ENCODE measurements at regions of chr4 and their contacts with region 1.

Region 1: DNA sequence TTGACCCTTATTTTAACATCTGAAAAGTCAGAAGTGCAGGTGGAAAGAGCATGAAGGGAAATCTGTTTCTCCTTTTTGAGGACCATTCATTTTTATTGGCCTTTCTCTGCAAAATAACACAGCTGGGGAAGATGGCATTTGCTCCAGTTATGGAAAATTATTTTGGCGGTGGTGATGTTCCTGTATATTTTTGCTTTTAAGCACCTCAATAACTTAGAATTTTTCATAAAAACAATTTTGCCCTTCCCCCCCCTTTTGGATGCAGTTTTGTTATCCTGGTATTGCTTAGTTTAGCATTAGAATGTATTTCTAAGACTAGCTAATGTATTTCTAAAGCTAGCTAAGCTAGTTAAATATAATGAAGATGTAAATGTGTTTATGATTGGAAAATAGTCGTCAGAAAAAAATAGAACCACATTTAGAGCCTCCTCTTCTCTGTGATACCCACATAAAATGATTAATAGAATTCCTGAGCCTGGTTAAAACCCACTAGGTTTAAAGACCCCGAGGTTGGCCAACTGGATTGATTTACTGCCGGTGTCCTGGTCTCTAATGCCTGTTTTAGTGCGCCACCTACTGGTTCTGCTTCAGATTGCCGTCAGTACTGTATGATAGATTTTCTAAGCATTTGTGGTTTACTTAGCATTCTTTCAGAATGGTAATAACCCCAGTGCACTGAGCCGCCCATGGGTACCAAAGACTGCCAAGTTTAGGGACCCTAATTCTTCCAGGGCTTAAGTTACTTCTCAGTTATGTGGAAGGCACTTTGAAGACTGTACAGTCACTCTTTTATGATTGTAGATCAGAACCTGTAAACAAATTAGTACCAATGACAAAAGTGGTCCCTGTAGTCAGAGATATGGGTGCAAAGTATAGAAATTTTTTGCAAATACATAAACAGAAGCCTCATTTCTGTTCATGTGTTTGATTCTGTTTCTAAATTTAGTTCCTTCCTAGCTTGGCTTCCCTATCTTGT is 11.4 kb downstream of the KLF3 start:
- DNase-seq: peak; percentile 77
- H3K4me3 Mint-ChIP-seq: peak overlapping the region; percentile 55
- H3K27ac Mint-ChIP-seq: peak overlapping the region; percentile 55
- H3K4me1 Mint-ChIP-seq: peaks cover 82% of the 10 kb centered on the region
- H3K27me3 Mint-ChIP-seq: no peaks in the 10 kb centered on the region
- CTCF ChIP-seq: peak; percentile 79

Region 2: DNA sequence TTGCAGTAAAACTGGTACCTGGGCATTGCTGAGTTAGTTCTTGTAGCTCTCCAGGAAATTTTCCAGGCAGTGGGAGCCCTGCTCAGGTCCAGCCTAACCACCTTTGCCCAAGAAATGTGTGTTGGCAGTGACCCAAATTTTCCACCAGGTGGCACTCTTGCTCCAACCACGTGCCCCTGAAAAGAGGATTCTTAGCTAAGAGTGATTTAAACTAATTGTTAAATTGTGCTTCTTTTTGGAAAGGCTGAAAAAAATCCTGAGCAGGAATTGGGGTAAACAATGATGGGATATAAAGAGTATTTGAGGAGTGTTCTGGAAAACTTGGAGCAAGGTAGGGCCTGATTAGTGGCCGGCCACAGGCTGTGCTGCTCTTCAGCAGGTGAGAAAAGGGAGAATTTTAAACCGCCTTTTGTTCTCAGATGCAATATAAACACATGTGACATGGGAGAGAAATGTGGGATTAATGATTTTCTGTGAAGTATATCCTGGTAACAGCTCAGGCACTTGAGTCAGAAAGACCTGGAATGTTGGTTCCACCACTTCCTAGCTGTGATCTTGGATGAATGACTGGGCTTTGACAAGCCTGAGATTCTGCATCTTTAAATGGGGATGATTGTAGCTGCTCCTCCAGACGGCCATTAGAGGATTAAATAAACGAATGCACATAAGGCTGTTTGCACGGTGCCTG is 495.6 kb before region 1 on chr4:
- CTCF ChIA-PET with region 1: interaction called, 9 read pairs
- intact Hi-C with region 1: loop called (anchors 1 kb)
- DNase-seq: peak; percentile 73
- H3K4me3 Mint-ChIP-seq: peak overlapping the region; percentile 4
- H3K27ac Mint-ChIP-seq: peak overlapping the region; percentile 88
- H3K4me1 Mint-ChIP-seq: peaks cover 34% of the 10 kb centered on the region
- H3K27me3 Mint-ChIP-seq: no peaks in the 10 kb centered on the region
- CTCF ChIP-seq: peak; percentile 70

Region 3: GRCh38 chr4:38230121-38230801 is 445.2 kb before region 1 on chr4:
- CTCF ChIA-PET with region 1: no interaction called
- intact Hi-C with region 1: loop called (anchors 5 kb)
- DNase-seq: peak; percentile 46
- H3K4me3 Mint-ChIP-seq: peak overlapping the region; percentile 32
- H3K27ac Mint-ChIP-seq: peak overlapping the region; percentile 79
- H3K4me1 Mint-ChIP-seq: peaks cover 40% of the 10 kb centered on the region
- H3K27me3 Mint-ChIP-seq: no peaks in the 10 kb centered on the region
- CTCF ChIP-seq: no peak

Region 4: DNA sequence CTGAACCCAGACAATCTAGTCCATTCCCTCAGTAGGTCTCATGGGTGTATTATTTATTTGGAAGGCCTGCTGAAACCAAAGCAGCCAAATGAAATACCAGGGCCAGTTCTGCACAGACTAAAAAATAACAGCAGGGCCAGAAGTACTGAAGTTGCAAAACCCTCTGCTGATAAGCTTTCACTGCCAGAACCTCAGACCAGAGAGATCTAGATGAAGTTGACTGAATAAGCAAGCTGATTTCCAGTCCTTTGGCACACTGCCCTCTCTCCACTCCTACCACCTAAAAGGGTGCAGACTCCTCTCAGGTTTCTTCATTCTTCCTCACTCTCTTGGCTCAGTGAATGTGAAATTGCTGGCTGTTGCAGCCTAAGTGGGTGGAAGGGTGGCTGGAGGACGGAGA is 288.1 kb before region 1 on chr4:
- CTCF ChIA-PET with region 1: interaction called, 7 read pairs
- intact Hi-C with region 1: loop called (anchors 2 kb)
- DNase-seq: peak; percentile 49
- H3K4me3 Mint-ChIP-seq: no peak overlapping the region
- H3K27ac Mint-ChIP-seq: no peak overlapping the region
- H3K4me1 Mint-ChIP-seq: peaks cover 9% of the 10 kb centered on the region
- H3K27me3 Mint-ChIP-seq: no peaks in the 10 kb centered on the region
- CTCF ChIP-seq: no peak